ENCODE measurements at regions of chr2 and their contacts with region 1.

Region 1: GRCh38 chr2:94986392-94986963 is 39.0 kb upstream of the MAL start:
- DNase-seq: peak; percentile 63
- H3K4me3 ChIP-seq: no peak overlapping the region
- H3K27ac ChIP-seq: no peak overlapping the region
- H3K4me1 ChIP-seq: no peaks in the 10 kb centered on the region
- H3K27me3 ChIP-seq: peaks cover 53% of the 10 kb centered on the region
- CTCF ChIP-seq: peak; percentile 77
- EP300 ChIP-seq: no peak
- RAD21 ChIP-seq: peak; percentile 53

Region 2: DNA sequence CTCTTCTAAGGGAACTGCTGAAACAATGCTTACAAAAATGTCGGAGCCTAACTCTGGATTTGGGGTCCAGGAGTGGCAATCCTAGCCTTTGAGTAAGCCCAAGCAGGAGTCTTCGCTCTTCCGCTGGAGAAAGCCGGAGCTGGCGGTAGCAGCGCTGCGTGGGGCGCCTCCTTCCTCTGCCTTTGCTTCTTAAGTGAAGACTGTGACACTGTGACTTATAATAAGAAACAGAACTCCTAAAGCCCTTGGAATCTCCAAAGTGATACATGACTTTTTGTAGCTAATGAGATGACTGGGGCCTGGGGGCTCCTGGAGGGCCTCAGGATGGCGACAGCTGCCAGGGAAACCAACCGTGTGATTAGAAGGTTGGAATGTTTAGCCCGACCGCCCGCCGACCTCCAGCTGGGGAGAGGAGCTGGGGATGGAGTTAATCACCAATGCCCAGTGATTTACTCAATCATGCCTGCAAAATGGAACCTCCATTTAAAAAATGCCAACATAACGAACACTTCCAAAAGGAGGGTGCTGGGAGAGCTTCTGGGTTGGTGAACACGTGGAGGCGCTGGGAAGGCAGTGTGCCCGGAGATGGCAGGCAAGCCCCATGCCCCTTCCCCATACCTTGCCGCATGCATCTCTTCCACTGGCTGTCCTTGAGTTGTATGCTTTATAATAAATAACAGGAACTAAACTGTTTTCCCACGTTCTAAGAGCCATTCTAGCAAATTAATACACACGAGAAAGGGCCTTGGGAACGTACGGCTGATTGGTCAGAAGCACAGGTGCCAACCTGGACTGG is 10.0 kb after region 1 on chr2:
- CTCF ChIA-PET with region 1: interaction called, 25 read pairs
- POLR2A ChIA-PET with region 1: no interaction called
- DNase-seq: no peak
- H3K4me3 ChIP-seq: no peak overlapping the region
- H3K27ac ChIP-seq: no peak overlapping the region
- H3K4me1 ChIP-seq: no peaks in the 10 kb centered on the region
- H3K27me3 ChIP-seq: peaks cover 73% of the 10 kb centered on the region
- CTCF ChIP-seq: no peak
- EP300 ChIP-seq: no peak
- RAD21 ChIP-seq: no peak

Region 3: DNA sequence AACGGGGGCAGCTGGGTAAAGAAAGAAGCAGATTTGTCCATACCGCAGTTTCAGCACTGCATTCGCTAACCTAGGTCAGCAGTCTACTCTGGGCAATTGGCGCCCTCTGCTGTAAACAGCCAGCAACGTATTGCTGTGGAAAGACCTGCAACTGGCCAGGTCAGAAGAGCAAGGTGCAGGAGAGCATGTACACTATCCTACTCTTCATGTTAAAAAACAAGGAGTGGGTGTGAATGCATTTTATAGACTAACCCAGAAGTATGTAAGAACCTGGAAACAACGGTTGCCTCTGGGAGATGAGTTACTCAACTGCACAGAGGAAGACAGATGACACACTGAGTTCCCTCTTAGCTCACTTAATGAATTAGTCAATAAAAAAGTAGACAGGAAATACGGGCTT is 128.9 kb after region 1 on chr2:
- CTCF ChIA-PET with region 1: interaction called, 25 read pairs
- POLR2A ChIA-PET with region 1: no interaction called
- DNase-seq: peak; percentile 75
- H3K4me3 ChIP-seq: peak overlapping the region in 1 of 2 experiments; percentile 33; a peak in 1 of 4 replicates
- H3K27ac ChIP-seq: no peak overlapping the region
- H3K4me1 ChIP-seq: no peaks in the 10 kb centered on the region
- H3K27me3 ChIP-seq: no peaks in the 10 kb centered on the region
- CTCF ChIP-seq: peak; percentile 82
- EP300 ChIP-seq: no peak
- RAD21 ChIP-seq: peak; percentile 83

Region 4: DNA sequence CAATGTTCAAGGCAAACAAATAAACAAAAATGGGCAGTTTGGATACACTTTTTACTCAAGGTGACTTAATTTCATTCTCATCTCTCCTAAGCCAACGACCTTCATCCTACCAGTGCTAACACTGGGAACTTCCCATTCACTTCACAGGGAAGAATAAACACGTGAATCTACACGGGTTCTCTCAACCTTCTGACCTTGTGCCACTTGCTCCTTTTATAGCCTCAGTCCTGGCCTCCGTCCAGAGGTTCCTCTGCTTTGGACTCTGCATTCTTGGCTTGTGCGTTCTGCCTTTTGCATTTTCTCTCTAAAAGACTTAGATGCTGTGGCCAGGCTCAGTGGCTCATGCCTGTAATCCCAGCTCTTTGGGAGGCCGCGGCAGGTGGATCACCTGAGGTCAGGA is 193.0 kb after region 1 on chr2:
- CTCF ChIA-PET with region 1: no interaction called
- POLR2A ChIA-PET with region 1: no interaction called
- DNase-seq: no peak
- H3K4me3 ChIP-seq: no peak overlapping the region
- H3K27ac ChIP-seq: no peak overlapping the region
- H3K4me1 ChIP-seq: no peaks in the 10 kb centered on the region
- H3K27me3 ChIP-seq: no peaks in the 10 kb centered on the region
- CTCF ChIP-seq: no peak
- EP300 ChIP-seq: no peak
- RAD21 ChIP-seq: no peak